ENCODE measurements at regions of chr7 and their contacts with region 1.

Region 1: GRCh38 chr7:46682836-46683624 is 762.0 kb upstream of the IGFBP3 start:
- DNase-seq: no peak
- H3K4me3 ChIP-seq: no peak overlapping the region
- H3K27ac ChIP-seq: no peak overlapping the region
- H3K4me1 ChIP-seq: peaks cover 3% of the 10 kb centered on the region
- H3K27me3 ChIP-seq: no peaks in the 10 kb centered on the region
- CTCF ChIP-seq: no peak
- EP300 ChIP-seq: no peak
- POLR2A ChIP-seq: no peak

Region 2: DNA sequence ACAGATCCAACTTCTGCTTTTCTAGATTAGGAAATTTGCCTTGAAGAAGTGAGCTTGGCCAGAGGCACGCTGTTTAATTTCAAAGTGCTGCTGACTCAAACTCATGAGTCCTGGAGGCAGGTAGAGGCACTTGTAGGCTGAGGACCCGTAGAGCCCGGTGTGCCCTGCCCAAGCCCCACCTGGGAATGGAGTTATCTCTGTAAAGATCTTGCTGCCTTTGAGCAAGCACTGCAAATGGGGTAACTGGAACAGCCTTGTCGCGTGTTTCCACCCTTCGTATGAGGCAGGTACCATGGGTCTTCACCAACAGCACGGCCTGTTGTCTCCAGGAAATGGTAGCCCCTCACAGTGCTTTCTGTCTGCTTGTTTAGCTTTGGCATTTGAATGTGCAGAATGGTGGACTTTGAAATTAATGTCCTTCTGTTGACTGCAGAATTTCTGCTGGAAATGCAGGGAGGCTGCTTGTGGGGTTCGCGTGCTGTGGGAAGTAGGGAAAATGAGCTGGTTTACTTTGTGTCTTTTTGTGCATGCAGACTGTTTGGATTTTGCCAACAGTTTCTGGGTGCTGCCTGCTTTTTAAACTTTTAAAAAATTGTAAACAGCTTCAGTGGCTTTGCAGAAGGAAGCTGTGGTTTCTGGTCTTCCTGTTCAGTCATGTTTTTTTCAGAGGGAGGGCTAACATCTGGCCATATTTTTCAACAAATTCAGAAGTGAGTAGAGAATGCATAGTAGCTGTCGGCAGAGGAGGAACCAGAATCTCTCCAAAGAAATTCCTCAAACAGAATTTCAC is 1655.9 kb before region 1 on chr7:
- intact Hi-C with region 1: no loop called
- DNase-seq: no peak
- H3K4me3 ChIP-seq: no peak overlapping the region
- H3K27ac ChIP-seq: no peak overlapping the region
- H3K4me1 ChIP-seq: no peaks in the 10 kb centered on the region
- H3K27me3 ChIP-seq: no peaks in the 10 kb centered on the region
- CTCF ChIP-seq: no peak
- EP300 ChIP-seq: no peak
- POLR2A ChIP-seq: no peak

Region 3: DNA sequence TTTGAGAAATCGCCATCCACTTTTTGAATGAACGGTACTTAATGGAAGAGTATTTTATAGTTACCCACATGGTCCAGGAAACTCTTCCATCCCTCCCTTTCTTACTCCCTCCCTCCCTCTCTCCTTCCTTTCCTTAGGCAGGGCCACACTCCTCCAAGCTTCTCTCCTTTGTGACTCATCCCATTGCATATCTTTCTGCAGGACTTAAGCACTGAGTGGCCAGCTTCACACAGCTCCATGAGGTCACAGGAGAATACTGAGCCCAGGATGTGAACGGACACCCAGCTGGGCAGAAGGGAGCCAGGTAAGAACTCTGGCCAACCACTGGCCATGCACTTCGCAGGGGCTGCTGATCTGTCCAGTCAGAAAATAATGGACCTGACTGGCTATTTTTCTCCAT is 1298.5 kb before region 1 on chr7:
- intact Hi-C with region 1: no loop called
- DNase-seq: no peak
- H3K4me3 ChIP-seq: no peak overlapping the region
- H3K27ac ChIP-seq: no peak overlapping the region
- H3K4me1 ChIP-seq: no peaks in the 10 kb centered on the region
- H3K27me3 ChIP-seq: no peaks in the 10 kb centered on the region
- CTCF ChIP-seq: no peak
- EP300 ChIP-seq: no peak
- POLR2A ChIP-seq: no peak

Region 4: GRCh38 chr7:46725838-46726237 is 42.8 kb after region 1 on chr7:
- intact Hi-C with region 1: loop called in 1 of 4 experiments (anchors 1 kb)
- DNase-seq: no peak
- H3K4me3 ChIP-seq: no peak overlapping the region
- H3K27ac ChIP-seq: no peak overlapping the region
- H3K4me1 ChIP-seq: no peaks in the 10 kb centered on the region
- H3K27me3 ChIP-seq: no peaks in the 10 kb centered on the region
- CTCF ChIP-seq: no peak
- EP300 ChIP-seq: no peak
- POLR2A ChIP-seq: no peak

Region 5: GRCh38 chr7:46859963-46860475 is 177.0 kb after region 1 on chr7:
- intact Hi-C with region 1: no loop called
- DNase-seq: no peak
- H3K4me3 ChIP-seq: no peak overlapping the region
- H3K27ac ChIP-seq: no peak overlapping the region
- H3K4me1 ChIP-seq: no peaks in the 10 kb centered on the region
- H3K27me3 ChIP-seq: no peaks in the 10 kb centered on the region
- CTCF ChIP-seq: no peak
- EP300 ChIP-seq: no peak
- POLR2A ChIP-seq: no peak

Region 6: DNA sequence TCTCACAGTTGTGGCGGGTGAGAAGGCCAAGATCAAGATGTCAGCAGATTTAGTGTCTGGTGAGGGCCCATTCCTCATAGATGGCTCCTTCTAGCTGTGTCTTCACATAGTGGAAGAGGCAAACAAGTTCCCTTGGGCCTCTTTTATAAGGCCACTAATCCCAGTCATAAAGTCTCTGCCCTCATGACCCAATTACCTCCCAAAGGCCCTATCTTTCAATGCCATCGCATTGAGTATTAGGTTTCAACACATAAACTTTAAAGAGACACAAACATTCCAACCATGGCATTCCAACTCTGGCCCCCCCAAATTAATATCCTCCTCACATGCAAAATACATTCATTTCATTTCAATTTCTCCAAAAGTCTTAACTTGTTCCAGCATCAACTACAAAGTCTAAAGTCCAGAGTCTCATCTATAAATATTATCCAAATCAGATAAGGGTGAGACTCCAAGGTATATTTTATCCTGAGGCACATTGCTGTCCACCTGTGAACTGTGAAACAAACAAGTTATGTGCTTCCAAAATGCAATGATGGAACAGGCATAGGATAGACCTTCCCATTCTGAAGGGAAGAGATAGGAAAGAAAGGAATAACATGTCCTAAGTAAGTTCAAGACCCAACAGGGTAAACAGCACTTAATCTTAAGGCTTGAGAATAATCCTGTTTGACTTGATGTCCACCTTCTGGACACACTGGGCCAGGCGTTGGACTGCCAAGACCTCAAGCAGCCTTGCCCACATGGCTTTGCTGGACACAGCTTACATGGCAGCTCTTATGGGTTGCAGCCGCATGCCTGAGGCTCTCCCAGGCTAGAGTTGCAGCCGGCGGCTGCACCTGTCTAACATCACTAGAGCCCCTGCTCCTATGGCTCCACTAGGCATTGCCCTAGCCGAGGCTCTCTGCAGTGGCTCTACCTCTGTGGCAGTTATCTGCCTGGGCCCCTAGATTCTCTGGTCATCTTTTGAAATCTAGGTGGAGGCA is 586.1 kb after region 1 on chr7:
- intact Hi-C with region 1: no loop called
- DNase-seq: no peak
- H3K4me3 ChIP-seq: no peak overlapping the region
- H3K27ac ChIP-seq: no peak overlapping the region
- H3K4me1 ChIP-seq: peaks cover 5% of the 10 kb centered on the region
- H3K27me3 ChIP-seq: no peaks in the 10 kb centered on the region
- CTCF ChIP-seq: no peak
- EP300 ChIP-seq: no peak
- POLR2A ChIP-seq: no peak

Measured in ovary (tissue), 10 donors.